HEK293 (cell line): ENCODE measurements at regions of chr19 and their contacts with region 1.

Region 1: GRCh38 chr19:36837906-36838783 is at the start of gene ZNF790:
- H3K4me3 ChIP-seq: peak within 1 kb of the TSS; percentile 57
- H3K27ac ChIP-seq: peak within 1 kb of the TSS; percentile 83
- H3K4me1 ChIP-seq: no peaks in the 10 kb centered on the region
- CTCF ChIP-seq: peak; percentile 32

Region 2: GRCh38 chr19:37077934-37078725 is 240.0 kb after region 1 on chr19 and contains the start of gene ZNF420:
- CTCF ChIA-PET with region 1: no interaction called
- POLR2A ChIA-PET with region 1: interaction called, 12 read pairs
- H3K4me3 ChIP-seq: peak within 1 kb of the TSS; percentile 73
- H3K27ac ChIP-seq: peak within 1 kb of the TSS; percentile 57
- H3K4me1 ChIP-seq: peaks cover 7% of the 10 kb centered on the region; the same call in 1 of the 2 replicates
- CTCF ChIP-seq: no peak; the same call in none of the 2 replicates